PC-9 (cell line): ENCODE measurements at regions of chr9 and their contacts with region 1.

Region 1: GRCh38 chr9:77926309-77926959 is 105.2 kb downstream of the GNAQ start:
- DNase-seq: peak in 1 of 2 experiments; percentile 76
- H3K4me3 ChIP-seq: no peak overlapping the region
- H3K27ac ChIP-seq: peak overlapping the region; percentile 48
- H3K4me1 ChIP-seq: peaks cover 20% of the 10 kb centered on the region
- H3K27me3 ChIP-seq: no peaks in the 10 kb centered on the region
- CTCF ChIP-seq: no peak

Region 2: DNA sequence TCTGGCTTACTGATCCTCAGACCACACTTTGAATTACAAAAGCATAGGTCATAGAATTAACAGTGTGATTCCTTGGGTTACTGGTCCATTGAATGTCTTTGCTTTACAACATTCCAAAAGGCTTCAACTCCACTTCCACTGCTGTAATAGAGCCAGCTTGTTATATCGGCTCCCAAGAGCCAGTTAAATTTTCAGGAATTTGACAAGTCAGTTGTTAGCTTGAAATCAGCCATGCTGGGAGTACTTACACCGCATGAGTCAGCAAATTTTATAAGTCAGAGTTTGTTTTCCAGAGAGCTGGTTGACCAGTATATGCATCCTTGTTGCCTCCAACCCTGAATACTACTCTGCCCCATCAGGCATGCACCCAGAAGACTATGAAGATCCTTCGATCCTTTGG is 833.9 kb before region 1 on chr9:
- CTCF ChIA-PET with region 1: no interaction called
- POLR2A ChIA-PET with region 1: no interaction called
- intact Hi-C with region 1: no loop called
- DNase-seq: no peak
- H3K4me3 ChIP-seq: no peak overlapping the region
- H3K27ac ChIP-seq: no peak overlapping the region
- H3K4me1 ChIP-seq: no peaks in the 10 kb centered on the region
- H3K27me3 ChIP-seq: peaks cover 36% of the 10 kb centered on the region
- CTCF ChIP-seq: no peak

Region 3: GRCh38 chr9:77977210-77977611 is 50.8 kb after region 1 on chr9:
- CTCF ChIA-PET with region 1: no interaction called
- POLR2A ChIA-PET with region 1: interaction called, 8 read pairs
- intact Hi-C with region 1: loop called (anchors 2 kb)
- DNase-seq: peak; percentile 39 to 43
- H3K4me3 ChIP-seq: no peak overlapping the region
- H3K27ac ChIP-seq: no peak overlapping the region
- H3K4me1 ChIP-seq: peaks cover 25% of the 10 kb centered on the region
- H3K27me3 ChIP-seq: no peaks in the 10 kb centered on the region
- CTCF ChIP-seq: peak; percentile 36; the same call in 1 of the 2 replicates

Region 4: DNA sequence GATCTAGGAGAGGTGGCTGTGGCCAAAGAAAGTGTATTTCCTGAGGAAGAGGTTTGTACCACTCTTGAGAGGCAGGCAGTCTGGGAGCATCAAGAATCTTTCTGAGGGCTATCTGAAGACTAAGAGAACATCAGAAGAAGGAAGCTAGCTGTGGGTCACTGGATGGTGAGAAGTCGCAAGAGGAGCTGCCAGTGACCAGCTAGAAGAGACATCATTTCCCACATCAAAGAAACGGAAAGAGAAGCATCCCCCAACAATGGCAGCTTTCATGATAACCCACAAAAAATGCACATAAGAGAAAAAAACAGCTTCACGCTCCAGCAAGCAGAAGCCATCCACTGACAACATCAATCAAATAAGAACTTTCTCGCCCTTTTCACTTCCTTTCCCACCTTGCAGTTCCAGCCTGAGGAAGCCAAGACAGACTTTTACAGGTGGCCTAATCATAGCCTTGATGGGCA is 284.4 kb after region 1 on chr9:
- CTCF ChIA-PET with region 1: no interaction called
- POLR2A ChIA-PET with region 1: no interaction called
- intact Hi-C with region 1: no loop called
- DNase-seq: no peak
- H3K4me3 ChIP-seq: no peak overlapping the region
- H3K27ac ChIP-seq: no peak overlapping the region
- H3K4me1 ChIP-seq: no peaks in the 10 kb centered on the region
- H3K27me3 ChIP-seq: no peaks in the 10 kb centered on the region
- CTCF ChIP-seq: no peak